H1 (cell line): ENCODE measurements at regions of chr3 and their contacts with region 1.

Region 1: GRCh38 chr3:39000008-39000450 is 51.7 kb downstream of the SCN11A start:
- DNase-seq: no peak
- H3K4me3 ChIP-seq: no peak overlapping the region
- H3K27ac ChIP-seq: no peak overlapping the region
- H3K4me1 ChIP-seq: no peaks in the 10 kb centered on the region
- H3K27me3 ChIP-seq: no peaks in the 10 kb centered on the region
- CTCF ChIP-seq: peak in 2 of 3 experiments; percentile 92 to 98; a peak in 3 of 4 replicates
- EP300 ChIP-seq: no peak
- POLR2A ChIP-seq: no peak
- RAD21 ChIP-seq: peak; percentile 92

Region 2: DNA sequence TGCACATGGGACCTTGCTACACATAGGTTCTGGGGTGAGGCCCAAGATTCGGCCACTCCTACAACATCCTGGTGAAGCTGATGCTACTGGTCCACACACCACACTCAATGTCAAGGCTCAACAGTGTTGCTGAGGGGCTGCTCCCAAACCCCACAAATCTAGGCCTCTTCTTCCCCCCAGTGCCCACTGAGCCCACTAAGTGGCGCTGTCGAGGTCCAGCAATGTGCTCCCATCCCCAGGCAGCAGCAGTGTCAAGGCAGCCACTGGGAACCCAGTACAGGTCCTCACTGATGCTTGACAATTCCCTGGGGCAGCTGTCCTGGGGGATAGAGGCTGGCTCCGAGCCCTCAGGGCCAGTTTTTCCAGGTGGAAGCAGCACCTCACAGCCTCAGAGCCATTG is 372.1 kb before region 1 on chr3:
- CTCF ChIA-PET with region 1: interaction called, 12 read pairs
- POLR2A ChIA-PET with region 1: no interaction called
- DNase-seq: peak in 1 of 2 experiments; percentile 89
- H3K4me3 ChIP-seq: no peak overlapping the region
- H3K27ac ChIP-seq: no peak overlapping the region
- H3K4me1 ChIP-seq: peaks cover 0 to 16% (median 4%) of the 10 kb centered on the region in 4 experiments; a peak in 6 of 7 replicates
- H3K27me3 ChIP-seq: no peaks in the 10 kb centered on the region
- CTCF ChIP-seq: peak in 2 of 3 experiments; percentile 94 to 98; a peak in 3 of 4 replicates
- EP300 ChIP-seq: no peak
- POLR2A ChIP-seq: no peak
- RAD21 ChIP-seq: peak; percentile 74 to 83

Region 3: GRCh38 chr3:38738630-38739395 is 261.2 kb before region 1 on chr3:
- CTCF ChIA-PET with region 1: interaction called, 19 read pairs
- POLR2A ChIA-PET with region 1: no interaction called
- DNase-seq: peak; percentile 68 to 94
- H3K4me3 ChIP-seq: no peak overlapping the region
- H3K27ac ChIP-seq: no peak overlapping the region
- H3K4me1 ChIP-seq: peaks cover 0 to 3% (median 0%) of the 10 kb centered on the region in 4 experiments; a peak in 1 of 7 replicates
- H3K27me3 ChIP-seq: no peaks in the 10 kb centered on the region
- CTCF ChIP-seq: peak; percentile 75 to 98 (median 93)
- EP300 ChIP-seq: no peak
- POLR2A ChIP-seq: no peak
- RAD21 ChIP-seq: peak; percentile 88 to 93

Region 4: GRCh38 chr3:38916706-38917105 is 83.3 kb before region 1 on chr3:
- CTCF ChIA-PET with region 1: no interaction called
- POLR2A ChIA-PET with region 1: no interaction called
- DNase-seq: no peak
- H3K4me3 ChIP-seq: no peak overlapping the region
- H3K27ac ChIP-seq: no peak overlapping the region
- H3K4me1 ChIP-seq: no peaks in the 10 kb centered on the region
- H3K27me3 ChIP-seq: no peaks in the 10 kb centered on the region
- CTCF ChIP-seq: no peak
- EP300 ChIP-seq: no peak
- POLR2A ChIP-seq: no peak
- RAD21 ChIP-seq: no peak

Region 5: GRCh38 chr3:38966811-38967692 is 33.0 kb before region 1 on chr3:
- CTCF ChIA-PET with region 1: interaction called, 13 read pairs
- POLR2A ChIA-PET with region 1: no interaction called
- DNase-seq: no peak
- H3K4me3 ChIP-seq: no peak overlapping the region
- H3K27ac ChIP-seq: no peak overlapping the region
- H3K4me1 ChIP-seq: peaks cover 0 to 5% (median 1%) of the 10 kb centered on the region in 4 experiments; a peak in 3 of 7 replicates
- H3K27me3 ChIP-seq: peaks cover 0 to 2% (median 0%) of the 10 kb centered on the region in 4 experiments; a peak in 1 of 7 replicates
- CTCF ChIP-seq: no peak
- EP300 ChIP-seq: no peak
- POLR2A ChIP-seq: no peak
- RAD21 ChIP-seq: no peak

Region 6: GRCh38 chr3:39013289-39013688 is 13.3 kb after region 1 on chr3:
- CTCF ChIA-PET with region 1: interaction called, 48 read pairs
- POLR2A ChIA-PET with region 1: interaction called, 5 read pairs
- DNase-seq: no peak
- H3K4me3 ChIP-seq: no peak overlapping the region
- H3K27ac ChIP-seq: no peak overlapping the region
- H3K4me1 ChIP-seq: peaks cover 0 to 3% (median 1%) of the 10 kb centered on the region in 4 experiments; a peak in 1 of 7 replicates
- H3K27me3 ChIP-seq: no peaks in the 10 kb centered on the region
- CTCF ChIP-seq: no peak
- EP300 ChIP-seq: no peak
- POLR2A ChIP-seq: no peak
- RAD21 ChIP-seq: no peak